ENCODE measurements at regions of chr9 and their contacts with region 1.

Region 1: GRCh38 chr9:75088260-75088905 is at the start of gene OSTF1:
- DNase-seq: peak; percentile 83 to 98 (median 91)
- ATAC-seq: peak; percentile 81
- H3K4me3 ChIP-seq: peak within 1 kb of the TSS; percentile 99
- H3K4me3 Mint-ChIP-seq: peak within 1 kb of the TSS; percentile 98
- H3K27ac ChIP-seq: peak within 1 kb of the TSS; percentile 89 to 90
- H3K27ac Mint-ChIP-seq: peak within 1 kb of the TSS; percentile 85
- H3K4me1 ChIP-seq: peaks cover 58% of the 10 kb centered on the region
- H3K4me1 Mint-ChIP-seq: peaks cover 79% of the 10 kb centered on the region
- H3K27me3 ChIP-seq: no peaks in the 10 kb centered on the region
- H3K27me3 Mint-ChIP-seq: no peaks in the 10 kb centered on the region
- CTCF ChIP-seq: no peak
- total RNA-seq, gene OSTF1: 31.3 to 32.8 TPM

Region 2: DNA sequence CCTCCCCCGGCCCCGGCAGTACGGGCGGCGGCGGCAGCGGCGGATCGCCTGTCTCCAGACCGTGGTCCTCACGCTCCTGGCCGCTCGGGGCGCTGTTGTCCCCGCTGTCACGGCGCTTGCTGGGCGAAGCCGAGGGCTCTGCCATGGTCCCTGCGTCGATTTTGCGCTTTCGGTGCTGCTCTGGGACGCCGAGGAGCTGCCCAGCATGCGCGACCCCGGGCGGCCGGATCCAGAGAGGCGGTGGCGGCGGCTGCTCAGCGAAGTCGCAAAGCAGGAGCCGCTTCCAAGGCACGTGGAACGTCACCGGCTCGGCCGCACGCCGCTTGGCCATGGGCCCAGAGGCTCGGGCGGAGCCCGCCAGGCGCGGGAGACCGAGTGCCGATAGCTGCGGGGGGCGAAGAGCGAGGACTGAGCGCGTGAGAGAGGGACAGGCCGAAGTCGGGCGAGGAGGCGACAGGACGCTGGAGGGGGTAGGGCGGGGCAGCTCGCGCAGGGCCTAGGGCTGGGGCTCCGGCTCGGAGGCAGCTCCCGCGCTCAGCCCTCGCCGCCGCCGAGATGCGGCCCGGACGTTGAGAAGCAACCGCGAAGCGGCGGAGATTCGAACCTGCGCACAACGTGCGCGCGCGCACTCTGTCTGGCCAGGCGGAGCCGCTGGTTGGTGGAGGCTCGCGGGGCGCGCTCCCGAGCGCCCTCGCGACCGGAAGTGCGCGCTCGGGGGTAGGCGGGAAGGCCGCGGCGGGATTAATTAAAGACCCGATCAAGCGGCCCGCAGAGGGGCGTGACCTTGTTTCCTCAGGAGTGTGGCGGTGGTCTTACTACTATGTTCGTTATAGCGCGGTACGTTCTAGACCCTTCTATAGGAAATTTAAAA is 135.9 kb before region 1 on chr9 and contains the start of gene C9orf40:
- CTCF ChIA-PET with region 1: interaction called, 15 read pairs
- POLR2A ChIA-PET with region 1: interaction called, 95 read pairs
- intact Hi-C with region 1: loop called (anchors 1 kb)
- DNase-seq: peak; percentile 84 to 95 (median 90)
- ATAC-seq: peak; percentile 88
- H3K4me3 ChIP-seq: peak within 1 kb of the TSS; percentile 92
- H3K4me3 Mint-ChIP-seq: peak within 1 kb of the TSS; percentile 99
- H3K27ac ChIP-seq: peak within 1 kb of the TSS; percentile 81 to 83
- H3K27ac Mint-ChIP-seq: peak within 1 kb of the TSS; percentile 87
- H3K4me1 ChIP-seq: peaks cover 16% of the 10 kb centered on the region
- H3K4me1 Mint-ChIP-seq: peaks cover 28% of the 10 kb centered on the region
- H3K27me3 ChIP-seq: no peaks in the 10 kb centered on the region
- H3K27me3 Mint-ChIP-seq: no peaks in the 10 kb centered on the region
- CTCF ChIP-seq: peak; percentile 80
- total RNA-seq, gene C9orf40: 3.0 TPM

Region 3: GRCh38 chr9:75027187-75028107 is 60.9 kb before region 1 on chr9:
- CTCF ChIA-PET with region 1: interaction called, 29 read pairs
- POLR2A ChIA-PET with region 1: interaction called, 173 read pairs
- intact Hi-C with region 1: loop called (anchors 1 to 2 kb)
- DNase-seq: peak; percentile 2 to 71 (median 27)
- ATAC-seq: peak; percentile 4
- H3K4me3 ChIP-seq: peak overlapping the region; percentile 86
- H3K4me3 Mint-ChIP-seq: peak overlapping the region; percentile 98
- H3K27ac ChIP-seq: peak overlapping the region; percentile 70 to 85
- H3K27ac Mint-ChIP-seq: peak overlapping the region; percentile 92
- H3K4me1 ChIP-seq: peaks cover 24% of the 10 kb centered on the region
- H3K4me1 Mint-ChIP-seq: peaks cover 56% of the 10 kb centered on the region
- H3K27me3 ChIP-seq: no peaks in the 10 kb centered on the region
- H3K27me3 Mint-ChIP-seq: no peaks in the 10 kb centered on the region
- CTCF ChIP-seq: peak; percentile 30

Region 4: GRCh38 chr9:75105019-75105540 is 16.7 kb after region 1 on chr9:
- CTCF ChIA-PET with region 1: interaction called, 3 read pairs
- POLR2A ChIA-PET with region 1: interaction called, 21 read pairs
- intact Hi-C with region 1: no loop called
- DNase-seq: peak in 3 of 14 experiments; percentile 19 to 31 (median 27)
- ATAC-seq: no peak
- H3K4me3 ChIP-seq: no peak overlapping the region
- H3K4me3 Mint-ChIP-seq: peak overlapping the region; percentile 3
- H3K27ac ChIP-seq: no peak overlapping the region
- H3K27ac Mint-ChIP-seq: peak overlapping the region; percentile 73
- H3K4me1 ChIP-seq: peaks cover 36% of the 10 kb centered on the region
- H3K4me1 Mint-ChIP-seq: peaks cover 77% of the 10 kb centered on the region
- H3K27me3 ChIP-seq: no peaks in the 10 kb centered on the region
- H3K27me3 Mint-ChIP-seq: no peaks in the 10 kb centered on the region
- CTCF ChIP-seq: no peak

Region 5: DNA sequence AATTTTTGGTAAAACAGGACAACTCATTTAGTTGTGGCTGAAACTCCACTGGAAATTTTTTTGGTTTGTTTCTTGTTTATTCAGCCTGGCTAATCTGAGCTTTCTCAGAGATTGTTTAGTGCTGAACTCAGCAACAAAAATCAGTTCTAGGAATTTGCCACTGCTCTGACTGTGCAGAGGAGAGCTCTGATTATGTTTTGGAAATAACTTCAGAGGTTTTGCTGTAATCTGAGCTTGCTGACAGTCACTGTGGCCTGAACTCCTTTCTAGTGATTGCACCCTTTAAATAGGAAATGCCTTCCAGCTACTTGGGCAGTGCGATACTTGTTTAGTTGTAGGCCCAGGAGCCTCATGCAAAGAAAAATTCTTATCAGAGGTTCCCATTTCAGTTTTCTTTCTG is 60.2 kb after region 1 on chr9:
- CTCF ChIA-PET with region 1: interaction called, 3 read pairs
- POLR2A ChIA-PET with region 1: interaction called, 56 read pairs
- intact Hi-C with region 1: loop called (anchors 2 kb)
- DNase-seq: peak in 2 of 14 experiments; percentile 27 to 47
- ATAC-seq: no peak
- H3K4me3 ChIP-seq: no peak overlapping the region
- H3K4me3 Mint-ChIP-seq: peak overlapping the region; percentile 83
- H3K27ac ChIP-seq: peak overlapping the region; percentile 29 to 47
- H3K27ac Mint-ChIP-seq: peak overlapping the region; percentile 92
- H3K4me1 ChIP-seq: peaks cover 55% of the 10 kb centered on the region
- H3K4me1 Mint-ChIP-seq: peaks cover 91% of the 10 kb centered on the region
- H3K27me3 ChIP-seq: no peaks in the 10 kb centered on the region
- H3K27me3 Mint-ChIP-seq: no peaks in the 10 kb centered on the region
- CTCF ChIP-seq: no peak

Region 6: DNA sequence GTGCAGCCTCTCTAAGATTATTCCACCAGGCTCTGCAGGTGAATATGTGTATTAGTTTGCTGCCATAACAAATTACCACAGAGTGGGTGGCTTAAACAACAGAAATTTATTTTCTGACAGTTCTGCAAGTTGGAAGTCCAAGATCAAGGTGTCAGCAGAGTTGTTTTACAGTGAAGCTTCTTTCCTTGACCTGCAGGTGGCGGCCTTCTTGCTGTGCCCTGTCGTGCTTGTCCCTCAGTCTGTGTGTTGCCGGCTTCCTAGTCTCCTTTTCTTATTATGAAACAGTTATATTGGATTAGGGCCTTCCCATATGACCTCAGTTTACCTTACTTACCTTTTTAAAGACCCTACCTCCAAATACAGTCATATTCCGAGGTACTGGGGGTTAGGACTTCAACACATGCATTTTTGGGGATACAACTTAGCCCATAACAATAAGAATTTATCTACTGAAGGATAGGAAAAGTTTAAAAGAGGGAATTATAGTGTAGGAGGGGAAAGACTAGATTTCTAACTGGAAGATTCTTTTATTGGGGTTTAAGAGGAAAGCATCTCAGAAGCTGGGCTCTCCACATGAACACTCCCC is 97.3 kb after region 1 on chr9:
- CTCF ChIA-PET with region 1: interaction called, 8 read pairs
- POLR2A ChIA-PET with region 1: interaction called, 7 read pairs
- intact Hi-C with region 1: loop called (anchors 5 kb)
- DNase-seq: peak; percentile 22 to 69 (median 42)
- ATAC-seq: peak; percentile 73
- H3K4me3 ChIP-seq: no peak overlapping the region
- H3K4me3 Mint-ChIP-seq: no peak overlapping the region
- H3K27ac ChIP-seq: no peak overlapping the region
- H3K27ac Mint-ChIP-seq: peak overlapping the region; percentile 20
- H3K4me1 ChIP-seq: peaks cover 5% of the 10 kb centered on the region
- H3K4me1 Mint-ChIP-seq: peaks cover 25% of the 10 kb centered on the region
- H3K27me3 ChIP-seq: no peaks in the 10 kb centered on the region
- H3K27me3 Mint-ChIP-seq: no peaks in the 10 kb centered on the region
- CTCF ChIP-seq: peak; percentile 61

Region 7: DNA sequence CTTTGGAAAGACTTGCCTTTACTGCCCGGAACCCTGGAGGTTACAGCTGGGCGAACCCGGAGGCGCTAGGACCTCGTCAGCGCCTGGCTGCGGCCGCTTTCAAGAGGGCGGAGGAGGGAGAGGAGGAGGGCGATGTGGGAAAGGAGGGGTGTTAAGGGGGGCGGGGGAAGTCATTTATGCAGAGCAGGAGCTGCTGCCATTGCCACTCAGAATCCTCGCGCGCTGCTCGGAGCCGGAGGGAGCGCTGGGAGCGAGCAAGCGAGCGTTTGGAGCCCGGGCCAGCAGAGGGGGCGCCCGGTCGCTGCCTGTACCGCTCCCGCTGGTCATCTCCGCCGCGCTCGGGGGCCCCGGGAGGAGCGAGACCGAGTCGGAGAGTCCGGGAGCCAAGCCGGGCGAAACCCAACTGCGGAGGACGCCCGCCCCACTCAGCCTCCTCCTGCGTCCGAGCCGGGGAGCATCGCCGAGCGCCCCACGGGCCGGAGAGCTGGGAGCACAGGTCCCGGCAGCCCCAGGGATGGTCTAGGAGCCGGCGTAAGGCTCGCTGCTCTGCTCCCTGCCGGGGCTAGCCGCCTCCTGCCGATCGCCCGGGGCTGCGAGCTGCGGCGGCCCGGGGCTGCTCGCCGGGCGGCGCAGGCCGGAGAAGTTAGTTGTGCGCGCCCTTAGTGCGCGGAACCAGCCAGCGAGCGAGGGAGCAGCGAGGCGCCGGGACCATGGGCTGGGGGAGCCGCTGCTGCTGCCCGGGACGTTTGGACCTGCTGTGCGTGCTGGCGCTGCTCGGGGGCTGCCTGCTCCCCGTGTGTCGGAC is 802.3 kb after region 1 on chr9 and contains the start of gene PCSK5:
- CTCF ChIA-PET with region 1: no interaction called
- POLR2A ChIA-PET with region 1: interaction called, 3 read pairs
- intact Hi-C with region 1: loop called in 1 of 2 experiments (anchors 10 kb)
- DNase-seq: peak; percentile 69 to 92 (median 81)
- ATAC-seq: peak; percentile 91
- H3K4me3 ChIP-seq: peak within 1 kb of the TSS; percentile 76
- H3K4me3 Mint-ChIP-seq: peak within 1 kb of the TSS; percentile 93
- H3K27ac ChIP-seq: peak within 1 kb of the TSS; percentile 11 to 63
- H3K27ac Mint-ChIP-seq: peak within 1 kb of the TSS; percentile 83
- H3K4me1 ChIP-seq: peaks cover 33% of the 10 kb centered on the region
- H3K4me1 Mint-ChIP-seq: peaks cover 50% of the 10 kb centered on the region
- H3K27me3 ChIP-seq: no peaks in the 10 kb centered on the region
- H3K27me3 Mint-ChIP-seq: no peaks in the 10 kb centered on the region
- CTCF ChIP-seq: no peak
- total RNA-seq, gene PCSK5: 14.4 to 15.2 TPM

Measured in CD4-positive, alpha-beta T cell (primary cell).